ENCODE measurements at regions of chr5 and their contacts with region 1.

Region 1: DNA sequence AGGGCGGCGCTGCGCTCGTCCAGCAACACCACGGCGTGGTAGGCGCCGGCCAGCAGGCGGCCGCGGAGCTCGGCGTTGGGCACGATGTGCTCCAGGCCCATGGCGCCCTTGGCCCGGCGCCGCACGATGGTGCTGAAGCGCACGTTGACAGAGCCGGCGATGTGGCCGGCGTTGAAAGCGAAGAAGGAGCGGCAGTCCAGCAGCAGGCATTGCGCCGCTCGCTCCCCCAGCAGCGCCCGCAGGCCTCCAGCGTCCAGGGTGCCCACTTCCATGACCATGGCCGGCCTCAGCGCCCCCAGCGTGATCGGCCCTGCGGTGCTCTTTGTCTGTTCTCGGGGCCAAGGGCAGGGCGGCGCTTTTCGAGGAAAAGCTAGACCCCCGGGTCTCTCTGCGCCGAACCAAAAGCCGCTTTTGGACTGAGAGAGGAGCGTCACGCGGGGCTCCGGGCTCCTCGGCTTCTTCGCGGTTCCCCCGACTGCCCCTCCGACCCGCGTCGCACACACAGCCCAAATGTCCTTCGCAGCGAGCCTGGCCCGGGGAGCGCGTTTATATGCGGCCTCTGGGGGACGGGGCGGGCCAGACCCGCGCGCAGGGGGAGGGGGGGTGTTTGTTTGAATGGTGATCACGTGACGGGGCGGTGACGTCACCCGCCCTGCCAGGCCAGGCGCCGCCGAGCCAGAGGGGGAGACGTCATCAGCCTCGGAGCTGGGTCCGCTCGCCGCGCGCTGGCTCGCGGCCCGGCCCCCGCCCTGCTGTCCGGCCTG is at the start of gene DUSP1:
- DNase-seq: peak; percentile 97
- ATAC-seq: peak; percentile 78
- H3K4me3 Mint-ChIP-seq: peak within 1 kb of the TSS; percentile 88
- H3K27ac Mint-ChIP-seq: peak within 1 kb of the TSS; percentile 90
- H3K4me1 Mint-ChIP-seq: peaks cover 24% of the 10 kb centered on the region
- H3K27me3 Mint-ChIP-seq: peaks cover 39% of the 10 kb centered on the region
- CTCF ChIP-seq: no peak
- total RNA-seq, gene DUSP1: 9.5 to 12.4 TPM (median 11.0 TPM) in 3 replicates

Region 2: GRCh38 chr5:172707285-172708182 is 63.3 kb before region 1 on chr5:
- CTCF ChIA-PET with region 1: interaction called, 28 read pairs
- POLR2A ChIA-PET with region 1: no interaction called
- DNase-seq: peak; percentile 61
- ATAC-seq: peak; percentile 88
- H3K4me3 Mint-ChIP-seq: peak overlapping the region; percentile 18; the same call in 1 of the 2 replicates
- H3K27ac Mint-ChIP-seq: no peak overlapping the region
- H3K4me1 Mint-ChIP-seq: peaks cover 13% of the 10 kb centered on the region
- H3K27me3 Mint-ChIP-seq: peaks cover 36% of the 10 kb centered on the region
- CTCF ChIP-seq: no peak

Region 3: GRCh38 chr5:172722131-172722815 is 48.6 kb before region 1 on chr5:
- CTCF ChIA-PET with region 1: interaction called, 63 read pairs
- POLR2A ChIA-PET with region 1: interaction called, 11 read pairs
- DNase-seq: no peak
- ATAC-seq: no peak
- H3K4me3 Mint-ChIP-seq: no peak overlapping the region
- H3K27ac Mint-ChIP-seq: no peak overlapping the region
- H3K4me1 Mint-ChIP-seq: no peaks in the 10 kb centered on the region
- H3K27me3 Mint-ChIP-seq: peaks cover 25% of the 10 kb centered on the region
- CTCF ChIP-seq: no peak

Region 4: DNA sequence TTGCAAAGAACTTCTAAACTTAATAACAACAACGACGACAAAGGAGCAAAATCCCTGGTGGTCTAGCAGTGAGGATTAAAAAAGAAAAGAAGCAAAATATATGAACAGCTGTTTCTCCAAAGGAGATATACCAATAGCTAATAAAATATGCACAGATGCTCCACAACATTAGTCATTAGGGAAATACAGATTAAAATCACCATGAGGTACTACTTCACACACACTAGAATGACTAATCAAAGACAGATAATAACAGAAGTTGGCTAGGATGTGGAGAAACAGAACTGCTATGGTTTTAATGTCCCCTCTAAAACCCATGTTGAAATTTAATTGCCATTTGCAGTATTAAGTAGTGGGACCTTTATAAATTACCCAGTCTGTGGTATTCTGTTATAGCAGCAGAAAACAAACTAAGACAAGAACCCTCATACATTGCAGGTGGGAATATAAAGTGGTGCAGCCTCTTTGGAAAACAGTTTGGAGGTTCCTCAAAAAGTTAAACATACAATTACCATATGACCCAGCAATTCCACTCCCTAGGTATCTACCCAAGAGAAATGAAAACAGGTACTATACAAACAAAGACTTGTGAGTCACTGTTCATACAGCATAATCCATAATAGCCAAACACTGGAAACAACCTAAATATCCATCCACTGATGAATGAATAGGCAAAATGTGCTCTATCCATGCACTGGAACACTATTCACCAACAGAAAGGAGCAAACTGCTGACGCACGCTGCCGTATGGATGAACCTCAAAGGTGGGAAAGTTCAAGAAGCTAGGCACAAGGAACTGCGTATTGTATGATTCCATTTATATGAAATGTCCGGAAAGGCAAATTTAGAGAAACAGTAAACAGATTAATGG is 11.5 kb after region 1 on chr5:
- CTCF ChIA-PET with region 1: interaction called, 13 read pairs
- POLR2A ChIA-PET with region 1: interaction called, 3 read pairs
- DNase-seq: no peak
- ATAC-seq: no peak
- H3K4me3 Mint-ChIP-seq: no peak overlapping the region
- H3K27ac Mint-ChIP-seq: no peak overlapping the region
- H3K4me1 Mint-ChIP-seq: peaks cover 8% of the 10 kb centered on the region
- H3K27me3 Mint-ChIP-seq: peaks cover 5% of the 10 kb centered on the region
- CTCF ChIP-seq: no peak

Region 5: GRCh38 chr5:172795318-172795977 is 24.6 kb after region 1 on chr5:
- CTCF ChIA-PET with region 1: interaction called, 34 read pairs
- POLR2A ChIA-PET with region 1: interaction called, 5 read pairs
- DNase-seq: no peak
- ATAC-seq: no peak
- H3K4me3 Mint-ChIP-seq: no peak overlapping the region
- H3K27ac Mint-ChIP-seq: no peak overlapping the region
- H3K4me1 Mint-ChIP-seq: peaks cover 8% of the 10 kb centered on the region
- H3K27me3 Mint-ChIP-seq: peaks cover 5% of the 10 kb centered on the region; the same call in 1 of the 2 replicates
- CTCF ChIP-seq: no peak

Region 6: GRCh38 chr5:172898218-172898842 is 127.5 kb after region 1 on chr5:
- CTCF ChIA-PET with region 1: interaction called, 11 read pairs
- POLR2A ChIA-PET with region 1: interaction called, 3 read pairs
- DNase-seq: no peak
- ATAC-seq: no peak
- H3K4me3 Mint-ChIP-seq: no peak overlapping the region
- H3K27ac Mint-ChIP-seq: no peak overlapping the region
- H3K4me1 Mint-ChIP-seq: no peaks in the 10 kb centered on the region
- H3K27me3 Mint-ChIP-seq: no peaks in the 10 kb centered on the region
- CTCF ChIP-seq: no peak

Region 7: DNA sequence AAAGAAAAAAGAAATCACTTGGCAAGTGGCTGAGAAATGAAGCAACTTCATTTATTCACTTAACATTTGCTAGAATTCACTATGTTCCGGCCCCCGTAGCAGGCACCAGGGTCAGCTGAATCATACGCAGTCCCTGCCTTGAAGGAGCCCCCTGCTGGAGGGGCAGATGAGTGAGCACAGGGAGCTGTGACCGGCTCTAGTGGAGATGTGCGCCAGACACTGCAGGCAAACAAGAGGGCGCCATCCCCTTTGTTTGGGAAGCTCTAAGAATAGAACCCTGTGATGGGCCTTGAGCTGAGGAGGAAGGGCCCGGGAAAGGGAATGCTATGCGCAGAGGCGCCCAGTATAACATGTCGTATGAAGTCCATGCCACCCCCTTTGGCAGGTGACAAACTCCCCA is 168.2 kb after region 1 on chr5:
- CTCF ChIA-PET with region 1: interaction called, 14 read pairs
- POLR2A ChIA-PET with region 1: no interaction called
- DNase-seq: peak; percentile 74
- ATAC-seq: peak; percentile 82
- H3K4me3 Mint-ChIP-seq: no peak overlapping the region
- H3K27ac Mint-ChIP-seq: no peak overlapping the region
- H3K4me1 Mint-ChIP-seq: peaks cover 15% of the 10 kb centered on the region
- H3K27me3 Mint-ChIP-seq: no peaks in the 10 kb centered on the region
- CTCF ChIP-seq: peak; percentile 46

Measured in WTC11 (cell line).